ENCODE measurements at regions of chr14 and their contacts with region 1.

Region 1: GRCh38 chr14:32076278-32077080 is 625 bp upstream of the ARHGAP5 start:
- DNase-seq: peak; percentile 75 to 91
- H3K4me3 ChIP-seq: peak overlapping the region; percentile 78
- H3K27ac ChIP-seq: peak overlapping the region; percentile 98
- H3K4me1 ChIP-seq: peaks cover 26% of the 10 kb centered on the region
- H3K27me3 ChIP-seq: no peaks in the 10 kb centered on the region
- CTCF ChIP-seq: no peak

Region 2: DNA sequence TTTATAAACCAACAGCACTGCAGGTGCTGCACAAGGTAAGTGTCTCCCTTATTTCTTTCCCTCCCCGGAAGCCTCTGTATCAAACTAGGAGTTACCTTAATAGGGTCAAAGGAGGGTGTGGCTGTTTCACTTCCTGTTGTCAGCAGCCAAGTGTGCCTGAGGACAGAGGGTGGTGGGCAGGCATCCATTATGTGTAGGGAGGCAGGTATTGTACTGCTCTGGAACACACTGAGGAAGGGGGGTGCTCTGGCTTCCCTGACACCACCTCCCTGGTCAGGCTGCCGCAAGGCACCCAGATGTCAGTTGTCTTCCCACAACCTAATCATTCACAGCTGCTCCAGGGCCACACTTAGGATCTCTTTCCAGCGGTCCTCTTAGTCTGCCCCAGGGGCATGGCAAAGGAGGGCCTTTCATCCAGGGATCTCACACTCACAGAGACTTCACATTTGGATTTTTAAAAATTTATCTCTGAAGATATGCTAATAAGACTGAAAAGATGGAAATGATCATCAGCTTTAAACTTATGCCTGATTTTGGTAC is 131.3 kb before region 1 on chr14:
- CTCF ChIA-PET with region 1: no interaction called
- POLR2A ChIA-PET with region 1: no interaction called
- intact Hi-C with region 1: loop called (anchors 5 kb)
- DNase-seq: no peak
- H3K4me3 ChIP-seq: no peak overlapping the region
- H3K27ac ChIP-seq: no peak overlapping the region
- H3K4me1 ChIP-seq: peaks cover 22% of the 10 kb centered on the region
- H3K27me3 ChIP-seq: no peaks in the 10 kb centered on the region
- CTCF ChIP-seq: no peak

Region 3: DNA sequence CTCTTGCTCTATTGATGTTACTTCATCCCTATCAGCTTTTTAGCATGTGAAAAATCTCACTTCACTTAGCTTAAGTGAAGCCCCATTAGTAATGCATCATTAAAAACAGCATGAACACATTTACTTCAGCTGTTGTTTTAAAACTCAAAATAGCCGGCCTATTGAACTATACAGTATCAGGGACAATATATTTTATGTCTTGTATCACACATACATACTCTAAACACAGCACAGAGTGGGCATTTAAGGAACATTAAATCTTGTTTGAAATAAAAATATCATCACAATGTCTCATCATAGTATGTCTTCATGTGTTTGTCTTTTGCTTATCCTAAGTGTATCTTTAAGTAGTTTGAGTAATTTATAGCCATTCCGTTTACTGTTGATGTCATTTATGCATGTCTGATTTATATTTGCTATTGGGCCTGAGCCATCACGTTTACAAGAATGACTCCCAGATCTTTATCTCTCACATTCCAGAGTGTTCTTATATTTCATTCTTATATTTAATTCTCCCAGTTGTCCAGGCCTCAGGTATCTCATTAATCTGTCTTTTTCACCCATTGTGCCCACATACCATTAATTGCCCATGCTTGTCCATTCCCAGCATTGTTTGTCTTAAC is 58.1 kb after region 1 on chr14:
- CTCF ChIA-PET with region 1: no interaction called
- POLR2A ChIA-PET with region 1: no interaction called
- intact Hi-C with region 1: loop called (anchors 5 kb)
- DNase-seq: peak in 1 of 2 experiments; percentile 77
- H3K4me3 ChIP-seq: no peak overlapping the region
- H3K27ac ChIP-seq: no peak overlapping the region
- H3K4me1 ChIP-seq: 0 out of 2 replicates have a peak, but pooled peaks cover 4% of the 10 kb centered on the region
- H3K27me3 ChIP-seq: no peaks in the 10 kb centered on the region
- CTCF ChIP-seq: no peak

Region 4: GRCh38 chr14:32382704-32383103 is 306.2 kb after region 1 on chr14:
- CTCF ChIA-PET with region 1: no interaction called
- POLR2A ChIA-PET with region 1: no interaction called
- intact Hi-C with region 1: loop called (anchors 10 kb)
- DNase-seq: peak; percentile 30 to 34
- H3K4me3 ChIP-seq: no peak overlapping the region
- H3K27ac ChIP-seq: no peak overlapping the region
- H3K4me1 ChIP-seq: peaks cover 13% of the 10 kb centered on the region; the same call in 1 of the 2 replicates
- H3K27me3 ChIP-seq: no peaks in the 10 kb centered on the region
- CTCF ChIP-seq: peak; percentile 60

Region 5: GRCh38 chr14:32560209-32560857 is 483.9 kb after region 1 on chr14:
- CTCF ChIA-PET with region 1: no interaction called
- POLR2A ChIA-PET with region 1: interaction called, 14 read pairs
- intact Hi-C with region 1: loop called (anchors 10 kb)
- DNase-seq: peak; percentile 45 to 47
- H3K4me3 ChIP-seq: no peak overlapping the region
- H3K27ac ChIP-seq: no peak overlapping the region
- H3K4me1 ChIP-seq: no peaks in the 10 kb centered on the region
- H3K27me3 ChIP-seq: no peaks in the 10 kb centered on the region
- CTCF ChIP-seq: peak; percentile 90